ENCODE measurements at regions of chr2 and their contacts with region 1.

Region 1: GRCh38 chr2:189221853-189222772 is 42.6 kb upstream of the COL5A2 start:
- DNase-seq: peak; percentile 63
- H3K4me3 Mint-ChIP-seq: peak overlapping the region; percentile 31
- H3K27ac Mint-ChIP-seq: peak overlapping the region; percentile 96
- H3K4me1 Mint-ChIP-seq: peaks cover 29% of the 10 kb centered on the region
- H3K27me3 Mint-ChIP-seq: no peaks in the 10 kb centered on the region
- CTCF ChIP-seq: no peak

Region 2: DNA sequence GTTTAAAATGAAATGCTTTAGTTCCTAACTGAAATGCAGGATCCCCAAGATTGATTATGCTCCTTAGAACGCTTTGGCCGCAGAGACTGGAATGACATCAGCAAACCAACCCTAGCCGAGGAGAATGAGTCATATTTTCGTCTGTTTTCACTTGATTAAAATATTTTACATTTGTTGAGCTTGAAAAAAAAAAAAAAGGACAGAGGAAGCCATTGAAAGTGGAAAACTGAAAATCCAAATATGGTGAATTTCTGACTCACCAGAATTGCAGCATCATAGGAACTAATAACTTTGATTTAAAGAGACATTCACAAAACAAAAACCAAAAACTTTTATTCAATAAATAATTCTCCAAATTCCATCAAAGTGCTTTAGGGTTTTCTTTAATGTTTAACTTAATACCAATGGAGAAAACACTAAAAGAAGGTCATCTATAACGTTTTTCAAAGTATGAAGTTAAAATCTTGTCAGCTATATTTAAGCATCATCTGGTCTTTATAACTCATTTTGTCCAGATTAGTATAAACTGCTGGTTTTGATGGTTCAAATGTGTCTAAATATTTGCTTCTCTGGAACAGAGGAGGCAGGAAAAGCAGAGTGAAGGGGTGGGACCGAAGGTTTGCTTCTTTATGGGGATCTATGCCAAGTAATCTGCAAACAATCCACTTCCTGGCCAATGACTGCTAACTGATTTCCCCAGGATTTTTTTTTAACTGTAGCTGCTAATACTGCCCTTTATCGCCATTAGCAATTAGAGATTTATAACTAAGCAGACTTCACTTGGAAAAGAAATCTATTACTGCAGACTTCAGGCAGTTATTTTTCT is 11.7 kb before region 1 on chr2:
- CTCF ChIA-PET with region 1: interaction called, 4 read pairs
- POLR2A ChIA-PET with region 1: interaction called, 26 read pairs
- intact Hi-C with region 1: no loop called
- DNase-seq: peak; percentile 81
- H3K4me3 Mint-ChIP-seq: peak overlapping the region; percentile 8
- H3K27ac Mint-ChIP-seq: peak overlapping the region; percentile 94
- H3K4me1 Mint-ChIP-seq: peaks cover 16% of the 10 kb centered on the region
- H3K27me3 Mint-ChIP-seq: no peaks in the 10 kb centered on the region
- CTCF ChIP-seq: no peak

Region 3: DNA sequence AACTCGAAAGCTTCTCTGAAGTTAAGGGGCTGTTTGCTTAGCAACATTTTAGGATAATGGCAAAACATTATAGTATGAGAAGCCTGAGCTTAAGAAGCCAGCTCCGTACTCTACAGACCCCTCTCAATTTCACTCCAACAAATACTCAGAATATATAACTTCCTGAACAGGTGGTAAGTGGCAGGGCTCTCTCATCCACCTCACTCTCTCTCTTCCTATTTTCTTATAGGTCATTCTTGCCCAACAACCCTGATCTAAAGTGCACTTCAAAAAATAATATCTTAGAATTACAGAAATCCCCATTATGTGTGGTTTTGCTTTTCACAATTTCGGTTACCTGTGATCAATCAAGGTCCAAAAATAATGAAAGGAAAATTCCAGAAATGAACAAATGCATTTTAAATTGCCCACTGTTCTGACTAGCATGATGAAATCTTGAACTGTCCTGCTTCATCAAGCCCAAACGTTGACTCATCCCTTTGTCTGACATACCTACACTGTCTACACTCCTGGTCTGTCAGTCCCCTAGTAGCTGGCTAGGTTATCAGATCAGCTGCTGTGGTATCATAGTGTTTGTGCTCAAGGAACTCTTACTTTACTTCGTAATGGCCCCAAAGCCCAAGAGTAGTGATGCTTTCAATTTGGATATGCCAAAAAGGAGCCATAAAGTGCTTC is 80.3 kb after region 1 on chr2:
- CTCF ChIA-PET with region 1: no interaction called
- POLR2A ChIA-PET with region 1: no interaction called
- intact Hi-C with region 1: no loop called
- DNase-seq: peak; percentile 67
- H3K4me3 Mint-ChIP-seq: no peak overlapping the region
- H3K27ac Mint-ChIP-seq: peak overlapping the region; percentile 44
- H3K4me1 Mint-ChIP-seq: peaks cover 19% of the 10 kb centered on the region
- H3K27me3 Mint-ChIP-seq: no peaks in the 10 kb centered on the region
- CTCF ChIP-seq: no peak

Measured in MCF 10A (cell line).